Upper lobe of right lung (tissue), 1 donor: ENCODE measurements at regions of chr7 and their contacts with region 1.

Region 1: GRCh38 chr7:35801392-35802101 is 690 bp downstream of the SEPTIN7 start:
- DNase-seq: peak; percentile 90
- ATAC-seq: peak; percentile 63
- H3K4me3 ChIP-seq: peak overlapping the region; percentile 81
- H3K27ac ChIP-seq: peak overlapping the region; percentile 97
- H3K4me1 ChIP-seq: peaks cover 29% of the 10 kb centered on the region
- H3K27me3 ChIP-seq: no peaks in the 10 kb centered on the region
- CTCF ChIP-seq: peak; percentile 63

Region 2: GRCh38 chr7:35286422-35286821 is 515.1 kb before region 1 on chr7:
- intact Hi-C with region 1: no loop called
- DNase-seq: no peak
- ATAC-seq: no peak
- H3K4me3 ChIP-seq: no peak overlapping the region
- H3K27ac ChIP-seq: no peak overlapping the region
- H3K4me1 ChIP-seq: no peaks in the 10 kb centered on the region
- H3K27me3 ChIP-seq: no peaks in the 10 kb centered on the region
- CTCF ChIP-seq: no peak

Region 3: GRCh38 chr7:35670856-35671569 is 130.5 kb before region 1 on chr7:
- intact Hi-C with region 1: no loop called
- DNase-seq: no peak
- ATAC-seq: no peak
- H3K4me3 ChIP-seq: no peak overlapping the region
- H3K27ac ChIP-seq: no peak overlapping the region
- H3K4me1 ChIP-seq: no peaks in the 10 kb centered on the region
- H3K27me3 ChIP-seq: no peaks in the 10 kb centered on the region
- CTCF ChIP-seq: no peak

Region 4: GRCh38 chr7:35729061-35729783 is 72.3 kb before region 1 on chr7:
- intact Hi-C with region 1: loop called (anchors 10 kb)
- DNase-seq: no peak
- ATAC-seq: peak; percentile 44
- H3K4me3 ChIP-seq: no peak overlapping the region
- H3K27ac ChIP-seq: peak overlapping the region; percentile 24
- H3K4me1 ChIP-seq: peaks cover 8% of the 10 kb centered on the region
- H3K27me3 ChIP-seq: no peaks in the 10 kb centered on the region
- CTCF ChIP-seq: no peak

Region 5: DNA sequence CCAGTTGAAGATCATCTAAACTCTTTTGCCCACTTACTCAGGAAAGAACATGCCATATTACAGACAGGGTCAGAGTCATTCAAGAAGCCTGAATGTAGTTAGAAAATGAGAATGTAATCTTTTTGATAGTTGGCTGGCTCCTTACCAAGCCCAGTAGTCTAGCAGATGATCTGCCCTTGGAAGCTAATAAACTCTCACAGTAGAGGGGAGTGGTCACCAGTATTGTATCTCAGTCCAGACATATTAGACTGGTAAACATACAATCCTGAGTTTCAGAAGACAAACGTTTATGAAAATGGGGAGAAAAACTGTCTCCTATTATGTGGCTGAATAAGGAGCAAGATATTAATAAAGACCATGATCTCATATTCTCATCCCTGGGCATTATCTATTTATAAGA is 64.6 kb after region 1 on chr7:
- intact Hi-C with region 1: no loop called
- DNase-seq: no peak
- ATAC-seq: no peak
- H3K4me3 ChIP-seq: no peak overlapping the region
- H3K27ac ChIP-seq: no peak overlapping the region
- H3K4me1 ChIP-seq: peaks cover 3% of the 10 kb centered on the region
- H3K27me3 ChIP-seq: no peaks in the 10 kb centered on the region
- CTCF ChIP-seq: no peak